AG04449 (cell line): ENCODE measurements at regions of chr1 and their contacts with region 1.

Region 1: GRCh38 chr1:63674238-63674864 is 81.1 kb downstream of the PGM1 start:
- DNase-seq: no peak
- H3K4me3 ChIP-seq: no peak overlapping the region
- CTCF ChIP-seq: peak; percentile 84

Region 2: GRCh38 chr1:62712336-62713243 is 961.8 kb before region 1 on chr1:
- CTCF ChIA-PET with region 1: no interaction called
- POLR2A ChIA-PET with region 1: no interaction called
- DNase-seq: no peak
- H3K4me3 ChIP-seq: no peak overlapping the region
- CTCF ChIP-seq: no peak

Region 3: GRCh38 chr1:63615768-63616420 is 58.5 kb before region 1 on chr1:
- CTCF ChIA-PET with region 1: interaction called, 36 read pairs
- POLR2A ChIA-PET with region 1: no interaction called
- DNase-seq: no peak
- H3K4me3 ChIP-seq: no peak overlapping the region
- CTCF ChIP-seq: peak; percentile 40

Region 4: GRCh38 chr1:63662056-63662836 is 12.1 kb before region 1 on chr1:
- CTCF ChIA-PET with region 1: interaction called, 38 read pairs
- POLR2A ChIA-PET with region 1: no interaction called
- DNase-seq: no peak
- H3K4me3 ChIP-seq: no peak overlapping the region
- CTCF ChIP-seq: no peak

Region 5: DNA sequence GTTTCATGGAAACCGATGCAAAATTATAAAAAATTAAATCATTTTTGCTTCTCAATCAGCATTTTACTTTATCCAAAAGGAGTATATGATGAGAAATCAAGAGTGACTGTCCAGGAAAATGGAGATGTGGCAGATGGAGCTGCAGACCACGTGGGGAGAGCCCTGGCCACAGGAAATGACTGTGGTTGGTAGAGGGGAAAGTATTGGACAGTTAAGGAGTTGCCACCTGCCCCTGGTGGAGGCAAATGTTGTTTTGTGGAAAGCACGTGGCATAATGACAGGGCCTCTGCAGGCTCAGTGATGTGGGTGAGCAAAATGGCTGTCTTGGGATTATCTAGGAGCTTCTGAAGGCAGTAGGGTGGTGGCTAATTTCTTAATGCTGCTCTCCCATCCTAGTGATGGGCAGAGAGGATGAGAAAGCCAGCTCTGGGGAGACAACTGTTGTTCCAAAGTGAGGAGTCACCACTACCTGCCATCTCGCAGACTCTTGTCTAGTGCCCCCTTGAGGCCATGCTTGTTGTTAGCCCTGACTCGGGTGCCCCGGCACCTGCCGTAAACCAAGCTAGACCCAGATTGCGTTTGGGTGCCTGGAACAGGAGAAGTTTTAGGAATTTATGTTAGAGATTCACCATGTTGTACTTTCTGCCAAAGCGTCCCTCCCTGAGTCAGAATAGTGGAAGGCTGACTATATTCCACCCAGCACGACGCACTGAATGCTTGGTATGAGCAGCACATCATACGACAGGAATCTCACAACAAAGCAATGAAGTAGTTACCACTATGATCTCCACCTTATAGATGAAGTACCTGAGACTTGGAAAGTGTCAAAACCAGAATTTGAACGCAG is 243.4 kb after region 1 on chr1:
- CTCF ChIA-PET with region 1: interaction called, 21 read pairs
- POLR2A ChIA-PET with region 1: interaction called, 3 read pairs
- DNase-seq: no peak
- H3K4me3 ChIP-seq: no peak overlapping the region
- CTCF ChIP-seq: no peak

Region 6: DNA sequence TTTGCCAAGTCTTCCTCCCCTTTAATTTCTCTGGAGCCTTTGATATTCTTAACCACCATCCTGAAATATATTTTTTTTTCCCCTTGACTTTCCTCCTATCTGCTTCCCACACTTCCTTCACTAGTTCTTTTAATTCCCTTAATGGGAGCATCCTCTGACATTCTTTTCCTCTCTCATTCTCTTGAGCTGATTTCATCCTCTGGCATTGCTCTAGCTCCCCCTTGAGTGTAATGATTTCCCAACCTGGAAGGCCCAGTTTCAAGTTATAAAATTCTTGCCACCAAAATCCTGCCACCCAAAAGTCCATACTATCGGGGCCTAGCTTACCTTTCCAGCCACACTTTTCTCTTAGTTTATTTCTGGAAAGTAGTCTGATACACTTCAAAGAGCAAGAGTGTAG is 489.6 kb after region 1 on chr1:
- CTCF ChIA-PET with region 1: interaction called, 23 read pairs
- POLR2A ChIA-PET with region 1: no interaction called
- DNase-seq: no peak
- H3K4me3 ChIP-seq: no peak overlapping the region
- CTCF ChIP-seq: peak; percentile 58

Region 7: DNA sequence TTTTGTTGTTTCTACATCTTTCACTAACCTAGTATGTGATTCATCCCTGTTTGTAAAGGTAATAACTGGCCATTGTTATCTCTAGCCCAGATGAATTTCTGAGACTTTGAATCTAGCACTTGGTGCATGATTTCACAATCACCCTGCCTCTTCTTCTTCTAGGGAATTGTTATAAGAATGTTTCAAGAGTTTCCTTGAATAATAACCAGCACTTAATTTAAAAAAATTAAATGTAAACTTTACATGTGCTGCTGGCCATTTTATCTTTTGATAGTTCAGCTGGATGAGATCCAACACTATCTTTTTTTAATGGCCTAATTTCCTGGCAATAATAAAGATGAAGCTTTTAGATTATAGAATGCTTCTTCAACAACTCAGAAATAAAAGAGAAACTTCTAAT is 560.8 kb after region 1 on chr1:
- CTCF ChIA-PET with region 1: interaction called, 227 read pairs
- POLR2A ChIA-PET with region 1: no interaction called
- DNase-seq: no peak
- H3K4me3 ChIP-seq: no peak overlapping the region
- CTCF ChIP-seq: no peak

Region 8: GRCh38 chr1:64242895-64243756 is 568.8 kb after region 1 on chr1:
- CTCF ChIA-PET with region 1: interaction called, 227 read pairs
- POLR2A ChIA-PET with region 1: no interaction called
- DNase-seq: no peak
- H3K4me3 ChIP-seq: no peak overlapping the region
- CTCF ChIP-seq: peak; percentile 20